Caco-2 (cell line): ENCODE measurements at regions of chr6 and their contacts with region 1.

Region 1: GRCh38 chr6:120951258-120951657 is 383.0 kb downstream of the TBC1D32 start:
- DNase-seq: no peak
- H3K4me3 ChIP-seq: no peak overlapping the region
- H3K4me3 Mint-ChIP-seq: no peak overlapping the region
- H3K27ac Mint-ChIP-seq: no peak overlapping the region
- H3K4me1 ChIP-seq: peaks cover 15% of the 10 kb centered on the region; the same call in 1 of the 2 replicates
- H3K4me1 Mint-ChIP-seq: peaks cover 10% of the 10 kb centered on the region
- H3K27me3 ChIP-seq: no peaks in the 10 kb centered on the region
- H3K27me3 Mint-ChIP-seq: no peaks in the 10 kb centered on the region
- CTCF ChIP-seq: no peak

Region 2: DNA sequence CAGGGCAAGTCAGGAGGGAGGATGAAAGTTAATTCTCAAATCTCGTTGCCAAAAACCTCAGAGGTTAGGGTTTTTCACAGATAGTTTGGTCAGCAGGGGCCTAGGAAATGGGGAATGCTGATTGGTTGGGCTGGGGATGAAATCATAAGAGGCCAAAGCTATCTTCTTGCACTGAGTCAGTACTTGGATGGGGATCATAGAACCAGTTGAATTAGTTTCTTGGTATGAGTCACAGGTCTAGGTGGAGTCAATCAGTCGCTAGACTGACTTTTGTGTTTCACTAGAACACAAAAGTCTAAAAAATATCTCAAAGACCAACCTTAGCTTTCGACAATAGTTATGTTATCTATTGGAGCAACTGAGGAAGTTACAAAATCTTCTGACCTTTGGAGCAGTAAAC is 14.6 kb after region 1 on chr6:
- CTCF ChIA-PET with region 1: no interaction called
- POLR2A ChIA-PET with region 1: no interaction called
- intact Hi-C with region 1: loop called (anchors 1 kb)
- DNase-seq: no peak
- H3K4me3 ChIP-seq: no peak overlapping the region
- H3K4me3 Mint-ChIP-seq: no peak overlapping the region
- H3K27ac Mint-ChIP-seq: no peak overlapping the region
- H3K4me1 ChIP-seq: 0 out of 2 replicates have a peak, but pooled peaks cover 4% of the 10 kb centered on the region
- H3K4me1 Mint-ChIP-seq: no peaks in the 10 kb centered on the region
- H3K27me3 ChIP-seq: no peaks in the 10 kb centered on the region
- H3K27me3 Mint-ChIP-seq: no peaks in the 10 kb centered on the region
- CTCF ChIP-seq: no peak

Region 3: GRCh38 chr6:121032268-121033006 is 81.2 kb after region 1 on chr6:
- CTCF ChIA-PET with region 1: no interaction called
- POLR2A ChIA-PET with region 1: no interaction called
- intact Hi-C with region 1: no loop called
- DNase-seq: no peak
- H3K4me3 ChIP-seq: no peak overlapping the region
- H3K4me3 Mint-ChIP-seq: no peak overlapping the region
- H3K27ac Mint-ChIP-seq: no peak overlapping the region
- H3K4me1 ChIP-seq: no peaks in the 10 kb centered on the region
- H3K4me1 Mint-ChIP-seq: no peaks in the 10 kb centered on the region
- H3K27me3 ChIP-seq: no peaks in the 10 kb centered on the region
- H3K27me3 Mint-ChIP-seq: no peaks in the 10 kb centered on the region
- CTCF ChIP-seq: no peak

Region 4: DNA sequence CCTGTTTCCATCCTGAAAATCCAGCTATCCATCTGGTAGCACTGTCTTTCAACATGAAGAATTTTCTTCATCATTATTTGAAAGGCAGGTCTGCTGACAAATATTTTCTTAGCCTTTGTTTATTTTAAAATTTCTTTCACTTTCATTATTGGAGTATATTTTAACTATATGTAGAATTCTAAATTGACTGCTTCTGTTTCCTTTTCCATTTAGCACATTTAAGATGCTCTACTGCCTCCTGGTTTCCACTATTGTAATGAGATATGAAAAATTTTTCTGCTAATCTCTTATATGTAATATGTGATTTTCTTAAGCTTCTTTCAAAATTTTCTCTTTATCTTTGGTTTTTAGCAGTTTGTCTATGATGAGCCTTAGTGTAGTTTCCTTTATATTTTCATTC is 285.7 kb after region 1 on chr6:
- CTCF ChIA-PET with region 1: no interaction called
- POLR2A ChIA-PET with region 1: no interaction called
- intact Hi-C with region 1: no loop called
- DNase-seq: no peak
- H3K4me3 ChIP-seq: no peak overlapping the region
- H3K4me3 Mint-ChIP-seq: no peak overlapping the region
- H3K27ac Mint-ChIP-seq: no peak overlapping the region
- H3K4me1 ChIP-seq: no peaks in the 10 kb centered on the region; the same call in 1 of the 2 replicates
- H3K4me1 Mint-ChIP-seq: no peaks in the 10 kb centered on the region
- H3K27me3 ChIP-seq: no peaks in the 10 kb centered on the region
- H3K27me3 Mint-ChIP-seq: no peaks in the 10 kb centered on the region
- CTCF ChIP-seq: no peak

Region 5: DNA sequence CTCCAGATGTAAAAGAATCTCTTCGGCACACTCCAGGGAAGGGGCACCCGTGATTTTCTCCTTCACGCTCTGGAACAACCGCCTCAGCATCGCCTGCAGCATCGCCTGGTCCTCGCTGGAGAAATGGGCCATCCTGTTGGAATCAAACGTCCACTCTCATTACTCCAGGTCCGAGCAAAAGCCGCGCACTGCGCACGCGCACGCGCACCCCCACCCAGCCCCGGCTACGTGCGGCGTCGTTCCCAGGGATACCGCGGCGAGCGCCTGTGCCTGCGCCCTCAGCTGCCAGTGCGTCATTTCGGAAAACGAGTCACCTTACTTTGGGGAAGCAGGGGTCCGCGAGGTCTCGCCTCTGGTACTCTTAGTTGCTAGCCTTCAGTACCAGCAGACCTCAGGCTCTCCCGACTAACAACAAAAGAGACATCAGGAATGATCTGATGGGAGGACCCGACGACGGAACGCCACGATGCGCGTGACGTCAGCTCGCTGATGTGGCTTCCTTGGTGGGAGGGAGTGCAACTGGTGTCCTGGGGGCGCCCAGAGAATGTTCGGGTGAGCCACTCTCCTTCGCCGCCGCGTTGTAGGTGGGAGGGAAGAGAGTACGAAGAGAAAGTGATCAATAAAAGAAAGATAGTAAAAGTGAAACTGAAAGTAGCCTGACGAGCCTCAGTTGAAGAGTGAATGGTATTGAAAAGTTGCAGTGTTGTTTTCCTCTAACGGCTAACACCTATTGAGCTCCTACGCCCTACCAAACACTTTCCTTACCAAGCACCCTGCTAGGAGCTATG is 383.2 kb after region 1 on chr6 and contains the start of gene TBC1D32:
- CTCF ChIA-PET with region 1: no interaction called
- POLR2A ChIA-PET with region 1: no interaction called
- intact Hi-C with region 1: no loop called
- DNase-seq: peak; percentile 89 to 94
- H3K4me3 ChIP-seq: peak within 1 kb of the TSS; percentile 48
- H3K4me3 Mint-ChIP-seq: peak within 1 kb of the TSS; percentile 81
- H3K27ac Mint-ChIP-seq: peak within 1 kb of the TSS; percentile 87
- H3K4me1 ChIP-seq: peaks cover 9% of the 10 kb centered on the region; the same call in 1 of the 2 replicates
- H3K4me1 Mint-ChIP-seq: no peaks in the 10 kb centered on the region
- H3K27me3 ChIP-seq: no peaks in the 10 kb centered on the region
- H3K27me3 Mint-ChIP-seq: no peaks in the 10 kb centered on the region
- CTCF ChIP-seq: no peak
- total RNA-seq, gene TBC1D32: 3.4 and 5.6 TPM in 2 replicates